WTC11 (cell line): ENCODE measurements at regions of chr11 and their contacts with region 1.

Region 1: GRCh38 chr11:96054870-96055705 is 131.2 kb upstream of the MTMR2 start:
- DNase-seq: no peak
- ATAC-seq: peak; percentile 59
- H3K4me3 Mint-ChIP-seq: no peak overlapping the region
- H3K27ac Mint-ChIP-seq: peak overlapping the region; percentile 78
- H3K4me1 Mint-ChIP-seq: peaks cover 33% of the 10 kb centered on the region
- H3K27me3 Mint-ChIP-seq: no peaks in the 10 kb centered on the region
- CTCF ChIP-seq: 0 out of 2 replicates have a peak, but pooled peaks have one; percentile 17

Region 2: DNA sequence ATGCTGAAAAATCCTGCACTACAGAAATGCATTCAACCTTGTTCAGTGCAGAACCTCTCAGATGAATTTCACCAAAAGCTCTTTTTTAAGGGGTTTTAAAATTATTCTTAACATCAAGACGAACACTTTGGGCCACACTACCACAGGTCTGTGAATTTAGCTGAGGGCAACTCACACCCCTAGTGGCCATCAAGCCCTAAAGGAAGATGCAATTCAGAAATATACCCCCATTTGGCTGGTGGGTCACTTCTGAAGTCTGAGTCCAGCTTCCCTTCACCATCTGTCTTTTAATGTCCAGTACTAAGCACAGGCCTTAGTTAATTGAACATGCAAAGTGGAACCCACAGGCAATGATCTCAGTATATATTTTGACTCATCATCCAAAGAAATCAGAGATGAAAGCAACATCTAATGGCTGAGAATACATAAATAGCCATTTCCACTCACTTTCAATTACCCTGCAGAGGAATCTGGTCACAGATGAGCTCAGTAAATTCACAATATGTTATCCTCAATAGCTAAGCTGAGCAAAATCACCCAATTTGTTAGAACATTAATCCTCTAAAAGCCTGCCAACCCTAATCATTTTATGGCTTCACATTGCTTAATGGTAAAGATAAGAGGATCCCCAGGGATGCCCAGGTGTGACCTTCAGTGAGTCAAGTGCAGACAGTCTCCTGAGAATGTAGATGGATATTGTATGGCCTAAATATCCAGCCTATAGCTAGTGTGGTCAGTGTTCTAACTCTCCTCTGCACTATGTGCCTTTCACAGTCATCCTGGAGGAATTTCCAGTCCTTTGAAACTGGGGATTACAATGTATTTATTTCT is 315.8 kb before region 1 on chr11:
- CTCF ChIA-PET with region 1: no interaction called
- POLR2A ChIA-PET with region 1: no interaction called
- DNase-seq: no peak
- ATAC-seq: peak; percentile 65; the same call in 1 of the 2 replicates
- H3K4me3 Mint-ChIP-seq: no peak overlapping the region
- H3K27ac Mint-ChIP-seq: no peak overlapping the region
- H3K4me1 Mint-ChIP-seq: no peaks in the 10 kb centered on the region
- H3K27me3 Mint-ChIP-seq: no peaks in the 10 kb centered on the region
- CTCF ChIP-seq: no peak

Region 3: DNA sequence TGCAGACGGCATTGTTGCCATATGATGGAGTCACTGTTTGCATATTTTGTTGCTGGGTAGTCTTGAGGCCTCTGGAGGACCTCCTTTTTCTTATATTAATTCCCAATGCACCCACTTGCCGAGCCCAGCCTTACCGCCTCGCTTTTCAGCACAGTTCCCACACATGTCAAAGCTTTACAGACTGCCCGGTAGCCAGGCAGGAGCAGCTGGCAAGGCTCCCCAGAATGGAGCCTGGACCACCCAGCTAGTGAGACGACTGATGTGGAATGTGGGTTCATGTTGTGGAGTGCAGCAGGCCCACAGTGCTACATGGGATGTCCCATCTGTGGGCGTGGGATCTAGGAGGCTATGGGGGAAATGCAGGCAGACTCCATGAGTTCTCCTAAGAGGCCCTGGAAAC is 31.8 kb before region 1 on chr11:
- CTCF ChIA-PET with region 1: no interaction called
- POLR2A ChIA-PET with region 1: no interaction called
- DNase-seq: no peak
- ATAC-seq: no peak
- H3K4me3 Mint-ChIP-seq: no peak overlapping the region
- H3K27ac Mint-ChIP-seq: no peak overlapping the region
- H3K4me1 Mint-ChIP-seq: peaks cover 9% of the 10 kb centered on the region
- H3K27me3 Mint-ChIP-seq: peaks cover 2% of the 10 kb centered on the region; the same call in 1 of the 2 replicates
- CTCF ChIP-seq: no peak

Region 4: DNA sequence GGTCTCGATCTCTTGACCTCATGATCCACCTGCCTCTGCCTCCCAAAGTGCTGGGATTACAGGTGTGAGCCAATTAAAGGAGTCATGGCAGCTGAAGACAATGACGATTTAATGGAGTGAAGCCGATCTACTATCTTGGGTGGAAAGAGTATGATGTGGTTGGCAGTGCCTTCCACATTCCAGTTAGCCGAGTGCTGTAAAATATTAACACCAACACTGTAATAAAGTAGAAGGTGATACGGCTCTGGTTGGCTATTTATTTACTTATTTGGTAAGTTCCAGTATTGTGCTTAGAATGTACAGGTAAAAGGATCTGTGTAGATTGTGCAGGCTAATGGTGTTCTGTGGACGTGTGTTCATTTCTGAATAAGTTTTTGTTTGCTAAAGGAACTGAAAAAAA is 18.4 kb after region 1 on chr11:
- CTCF ChIA-PET with region 1: interaction called, 10 read pairs
- POLR2A ChIA-PET with region 1: no interaction called
- DNase-seq: no peak
- ATAC-seq: no peak
- H3K4me3 Mint-ChIP-seq: no peak overlapping the region
- H3K27ac Mint-ChIP-seq: no peak overlapping the region
- H3K4me1 Mint-ChIP-seq: peaks cover 21% of the 10 kb centered on the region
- H3K27me3 Mint-ChIP-seq: no peaks in the 10 kb centered on the region
- CTCF ChIP-seq: no peak

Region 5: GRCh38 chr11:96134602-96135001 is 79.5 kb after region 1 on chr11:
- CTCF ChIA-PET with region 1: no interaction called
- POLR2A ChIA-PET with region 1: no interaction called
- DNase-seq: no peak
- ATAC-seq: no peak
- H3K4me3 Mint-ChIP-seq: no peak overlapping the region
- H3K27ac Mint-ChIP-seq: no peak overlapping the region
- H3K4me1 Mint-ChIP-seq: peaks cover 27% of the 10 kb centered on the region
- H3K27me3 Mint-ChIP-seq: no peaks in the 10 kb centered on the region
- CTCF ChIP-seq: no peak

Region 6: DNA sequence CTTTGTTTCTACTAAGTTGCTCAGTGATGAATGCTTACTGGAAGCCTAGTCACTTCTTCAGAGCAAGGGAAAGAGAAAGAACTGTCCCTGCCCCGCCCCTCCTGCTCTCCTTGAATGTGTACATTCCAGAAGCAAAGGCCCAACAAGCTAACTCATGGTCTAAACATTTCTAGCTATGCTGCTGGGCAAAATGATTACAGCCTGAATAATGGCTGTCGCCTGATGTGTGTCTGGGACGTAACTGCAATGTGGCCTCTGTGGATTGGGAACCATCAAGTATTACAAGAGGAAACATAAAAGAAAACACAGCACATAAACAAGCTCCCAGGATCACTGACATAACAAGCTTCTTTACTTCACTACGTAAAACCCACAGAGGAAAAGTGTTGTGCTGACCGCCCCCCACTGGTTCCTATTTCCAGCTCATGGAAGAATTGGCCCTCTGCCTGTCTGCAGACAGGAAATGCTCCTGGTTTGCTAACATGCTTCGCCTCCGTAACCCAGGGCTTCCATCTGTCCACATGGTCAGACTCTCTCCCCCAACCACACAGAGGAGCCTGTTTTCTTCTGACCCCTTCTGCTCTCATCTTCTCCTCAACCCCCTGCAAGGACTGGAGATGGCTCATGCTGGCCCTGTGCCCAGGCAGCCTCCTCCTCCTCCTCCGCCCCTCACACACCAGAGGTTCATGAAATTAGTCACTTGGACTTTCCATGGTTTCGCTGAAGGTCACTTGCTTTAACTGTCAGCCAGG is 100.7 kb after region 1 on chr11:
- CTCF ChIA-PET with region 1: interaction called, 13 read pairs
- POLR2A ChIA-PET with region 1: no interaction called
- DNase-seq: peak; percentile 34
- ATAC-seq: peak; percentile 68
- H3K4me3 Mint-ChIP-seq: no peak overlapping the region
- H3K27ac Mint-ChIP-seq: peak overlapping the region; percentile 66
- H3K4me1 Mint-ChIP-seq: peaks cover 58% of the 10 kb centered on the region
- H3K27me3 Mint-ChIP-seq: no peaks in the 10 kb centered on the region
- CTCF ChIP-seq: no peak